ENCODE measurements at regions of chr13 and their contacts with region 1.

Region 1: DNA sequence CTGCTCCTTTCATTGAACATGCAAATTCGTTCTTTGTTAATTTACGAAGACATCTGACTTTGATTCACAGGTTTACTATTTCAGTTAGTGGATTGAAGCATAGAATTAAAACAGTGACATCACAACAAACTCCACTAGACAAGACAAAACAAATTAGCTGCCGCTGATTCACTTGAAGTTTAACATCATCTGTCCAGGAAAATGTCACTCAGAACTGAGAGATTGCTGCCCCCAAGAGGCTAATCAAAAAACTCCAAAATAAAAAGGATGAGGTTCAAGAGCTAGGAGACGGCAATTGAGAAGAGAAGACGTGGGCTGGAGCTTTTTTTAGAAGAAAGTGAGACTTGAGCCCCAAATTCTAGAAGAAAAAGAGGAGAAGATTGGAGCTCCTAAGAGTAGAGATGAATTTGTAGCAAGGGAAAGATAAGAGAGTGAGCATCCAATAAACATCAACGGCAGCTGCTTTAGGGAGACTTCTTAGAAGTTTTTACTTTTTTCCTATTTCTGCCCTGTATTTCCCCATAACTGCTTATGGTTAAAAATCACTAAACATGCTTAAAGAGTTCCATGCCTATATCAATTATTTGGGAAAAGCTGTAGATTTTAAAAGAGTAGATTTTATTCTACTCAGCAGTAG is 40.8 kb upstream of the TPP2 start:
- DNase-seq: no peak
- H3K4me3 Mint-ChIP-seq: no peak overlapping the region
- H3K27ac Mint-ChIP-seq: no peak overlapping the region
- H3K4me1 Mint-ChIP-seq: peaks cover 2% of the 10 kb centered on the region
- H3K27me3 Mint-ChIP-seq: peaks cover 9% of the 10 kb centered on the region

Region 2: GRCh38 chr13:101144808-101145419 is 1411.1 kb before region 1 on chr13:
- intact Hi-C with region 1: loop called (anchors 5 kb)
- DNase-seq: no peak
- H3K4me3 Mint-ChIP-seq: no peak overlapping the region
- H3K27ac Mint-ChIP-seq: no peak overlapping the region
- H3K4me1 Mint-ChIP-seq: no peaks in the 10 kb centered on the region
- H3K27me3 Mint-ChIP-seq: peaks cover 5% of the 10 kb centered on the region

Region 3: GRCh38 chr13:101514788-101515187 is 1041.2 kb before region 1 on chr13:
- intact Hi-C with region 1: loop called (anchors 5 kb)
- DNase-seq: no peak
- H3K4me3 Mint-ChIP-seq: no peak overlapping the region
- H3K27ac Mint-ChIP-seq: no peak overlapping the region
- H3K4me1 Mint-ChIP-seq: peaks cover 6% of the 10 kb centered on the region
- H3K27me3 Mint-ChIP-seq: peaks cover 18% of the 10 kb centered on the region

Region 4: DNA sequence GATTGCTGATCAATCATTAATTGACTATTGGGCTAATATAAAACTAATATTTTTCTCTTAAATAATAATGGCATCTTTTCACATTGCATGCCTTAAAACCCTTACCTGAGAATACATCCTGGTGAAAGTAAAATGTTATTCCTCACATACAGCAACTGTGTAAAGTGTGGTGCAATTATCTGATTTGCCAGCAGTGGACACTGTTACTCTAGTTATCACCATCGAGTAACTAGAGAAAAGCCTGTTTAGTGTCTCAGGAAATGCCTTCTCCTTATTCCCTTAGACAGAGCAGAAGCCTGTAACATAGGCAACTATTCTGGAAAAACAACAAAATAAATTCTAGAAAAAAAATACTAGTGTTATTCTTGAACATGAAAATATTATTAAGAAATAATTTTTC is 614.0 kb before region 1 on chr13:
- intact Hi-C with region 1: loop called (anchors 5 kb)
- DNase-seq: no peak
- H3K4me3 Mint-ChIP-seq: no peak overlapping the region
- H3K27ac Mint-ChIP-seq: no peak overlapping the region
- H3K4me1 Mint-ChIP-seq: no peaks in the 10 kb centered on the region
- H3K27me3 Mint-ChIP-seq: no peaks in the 10 kb centered on the region

Region 5: GRCh38 chr13:102141625-102142472 is 414.2 kb before region 1 on chr13:
- intact Hi-C with region 1: loop called (anchors 5 kb)
- DNase-seq: no peak
- H3K4me3 Mint-ChIP-seq: no peak overlapping the region
- H3K27ac Mint-ChIP-seq: no peak overlapping the region
- H3K4me1 Mint-ChIP-seq: no peaks in the 10 kb centered on the region
- H3K27me3 Mint-ChIP-seq: no peaks in the 10 kb centered on the region

Region 6: GRCh38 chr13:102394158-102395053 is 161.6 kb before region 1 on chr13:
- intact Hi-C with region 1: loop called (anchors 5 kb)
- DNase-seq: peak; percentile 94
- H3K4me3 Mint-ChIP-seq: peak overlapping the region; percentile 86
- H3K27ac Mint-ChIP-seq: peak overlapping the region; percentile 84
- H3K4me1 Mint-ChIP-seq: peaks cover 26% of the 10 kb centered on the region
- H3K27me3 Mint-ChIP-seq: peaks cover 17% of the 10 kb centered on the region

Region 7: DNA sequence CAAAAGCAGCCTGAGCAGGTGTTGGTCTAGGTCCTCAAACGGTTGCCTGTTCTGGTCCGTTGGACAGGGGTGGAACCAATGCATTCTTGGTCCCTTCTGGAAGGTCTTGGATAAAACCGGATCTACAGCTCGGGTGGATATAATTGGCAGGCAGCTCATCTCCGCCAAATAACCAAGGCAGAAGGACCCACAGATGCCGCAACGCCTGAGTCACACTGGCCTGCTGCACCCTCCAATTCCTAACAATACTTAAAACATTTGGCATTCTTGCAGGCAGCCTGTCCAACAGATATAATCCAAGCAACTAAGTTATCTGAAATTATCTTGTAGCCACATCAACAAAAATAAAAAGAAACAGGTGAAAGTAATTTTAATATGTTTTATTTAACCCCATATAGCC is 95.2 kb before region 1 on chr13:
- intact Hi-C with region 1: loop called (anchors 1 kb)
- DNase-seq: no peak
- H3K4me3 Mint-ChIP-seq: no peak overlapping the region
- H3K27ac Mint-ChIP-seq: no peak overlapping the region
- H3K4me1 Mint-ChIP-seq: peaks cover 11% of the 10 kb centered on the region
- H3K27me3 Mint-ChIP-seq: peaks cover 4% of the 10 kb centered on the region